A549 (cell line): ENCODE measurements at regions of chr20 and their contacts with region 1.

Region 1: DNA sequence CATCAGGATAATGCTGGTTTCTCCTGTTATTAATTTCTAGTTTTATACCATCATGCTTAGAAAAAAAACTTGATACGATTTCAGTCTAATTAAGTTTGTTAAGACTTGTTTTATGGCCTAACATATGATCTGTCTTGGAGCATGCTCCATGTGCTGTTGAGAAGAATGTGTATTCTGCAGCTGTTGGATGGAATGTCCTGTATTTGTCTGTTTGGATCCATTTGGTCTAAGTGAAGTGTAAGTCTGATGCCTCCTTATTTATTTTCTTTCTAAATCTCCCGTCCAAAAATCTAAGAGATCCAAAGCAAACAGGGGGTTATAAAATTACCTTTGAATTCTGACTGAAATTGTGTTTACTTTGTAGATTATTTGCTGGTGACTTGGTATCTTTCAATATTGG is 30.0 kb upstream of the PRND start:
- DNase-seq: no peak
- ATAC-seq: no peak
- H3K4me3 ChIP-seq: no peak overlapping the region
- H3K27ac ChIP-seq: no peak overlapping the region
- H3K4me1 ChIP-seq: peaks cover 35% of the 10 kb centered on the region
- CTCF ChIP-seq: no peak
- EP300 ChIP-seq: no peak
- POLR2A ChIP-seq: no peak
- RAD21 ChIP-seq: no peak

Region 2: GRCh38 chr20:4607287-4607713 is 84.5 kb before region 1 on chr20:
- CTCF ChIA-PET with region 1: interaction called, 3 read pairs
- POLR2A ChIA-PET with region 1: interaction called, 11 read pairs
- DNase-seq: peak; percentile 75 to 84
- ATAC-seq: peak; percentile 69 to 92
- H3K4me3 ChIP-seq: no peak overlapping the region
- H3K27ac ChIP-seq: 0 out of 6 replicates have a peak overlapping the region, but pooled peaks of 1 of the 2 experiments have one; percentile 44
- H3K4me1 ChIP-seq: no peaks in the 10 kb centered on the region
- CTCF ChIP-seq: peak; percentile 99
- EP300 ChIP-seq: no peak
- POLR2A ChIP-seq: no peak
- RAD21 ChIP-seq: peak; percentile 99

Region 3: GRCh38 chr20:4677846-4678245 is 13.9 kb before region 1 on chr20:
- CTCF ChIA-PET with region 1: interaction called, 12 read pairs
- POLR2A ChIA-PET with region 1: no interaction called
- DNase-seq: no peak
- ATAC-seq: no peak
- H3K4me3 ChIP-seq: no peak overlapping the region
- H3K27ac ChIP-seq: no peak overlapping the region
- H3K4me1 ChIP-seq: no peaks in the 10 kb centered on the region
- CTCF ChIP-seq: no peak
- EP300 ChIP-seq: no peak
- POLR2A ChIP-seq: no peak
- RAD21 ChIP-seq: no peak

Region 4: GRCh38 chr20:4702562-4703280 is 11.0 kb after region 1 on chr20:
- CTCF ChIA-PET with region 1: no interaction called
- POLR2A ChIA-PET with region 1: no interaction called
- DNase-seq: no peak
- ATAC-seq: peak; percentile 33 to 34; a peak in 4 of 6 replicates
- H3K4me3 ChIP-seq: no peak overlapping the region
- H3K27ac ChIP-seq: no peak overlapping the region
- H3K4me1 ChIP-seq: peaks cover 9% of the 10 kb centered on the region
- CTCF ChIP-seq: no peak
- EP300 ChIP-seq: no peak
- POLR2A ChIP-seq: no peak
- RAD21 ChIP-seq: no peak